ENCODE measurements at regions of chr1 and their contacts with region 1.

Region 1: DNA sequence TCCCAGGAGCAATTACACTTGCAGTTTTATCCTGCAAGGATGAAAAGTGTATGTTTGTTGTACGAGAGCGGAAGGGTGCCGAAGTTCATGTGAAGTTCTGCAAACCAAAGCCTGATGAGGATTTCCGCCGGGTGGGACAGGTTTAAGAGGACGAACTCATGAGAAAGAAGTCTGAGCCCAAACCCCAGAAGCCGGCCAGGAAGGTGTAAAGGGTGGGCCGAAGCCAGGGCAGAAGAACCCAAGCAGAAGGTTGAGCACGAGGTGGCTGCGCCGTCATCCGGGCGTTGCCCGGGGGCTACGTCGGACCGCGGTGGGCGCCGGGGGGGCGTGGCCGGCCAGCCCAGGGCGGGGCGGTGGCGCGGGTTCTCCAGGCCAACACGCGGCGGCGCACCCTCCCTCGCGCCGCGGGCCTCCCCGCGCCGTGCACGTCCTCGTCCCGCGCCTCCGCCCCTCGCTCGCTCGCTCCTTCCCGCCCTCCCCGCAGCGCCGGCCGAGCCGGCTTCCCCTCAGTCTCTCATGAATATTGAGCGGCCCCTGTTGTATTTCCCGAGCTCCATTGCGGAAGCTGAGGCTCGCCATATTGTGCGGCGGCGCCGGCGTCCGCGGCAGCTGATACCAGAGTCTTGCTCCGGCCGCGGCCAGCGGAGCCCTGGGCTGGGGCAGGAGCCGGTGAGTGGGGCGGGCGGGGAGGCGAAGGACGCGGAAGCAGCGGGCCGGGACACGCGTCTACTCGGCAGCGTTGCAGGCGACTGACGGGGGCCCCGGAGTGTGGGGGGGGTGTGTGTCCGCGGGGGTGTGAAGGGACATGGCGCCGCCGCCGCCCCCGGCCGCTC is at the start of gene RNF2:
- DNase-seq: peak; percentile 82 to 84
- H3K4me3 ChIP-seq: peak within 1 kb of the TSS; percentile 80
- H3K4me3 Mint-ChIP-seq: peak within 1 kb of the TSS; percentile 73
- H3K27ac Mint-ChIP-seq: peak within 1 kb of the TSS; percentile 67
- H3K4me1 ChIP-seq: peaks cover 17% of the 10 kb centered on the region
- H3K4me1 Mint-ChIP-seq: peaks cover 6% of the 10 kb centered on the region
- H3K27me3 ChIP-seq: no peaks in the 10 kb centered on the region
- H3K27me3 Mint-ChIP-seq: no peaks in the 10 kb centered on the region
- CTCF ChIP-seq: no peak
- total RNA-seq, gene RNF2: 27.1 and 31.7 TPM in 2 replicates

Region 2: GRCh38 chr1:185033686-185034085 is 11.5 kb before region 1 on chr1:
- CTCF ChIA-PET with region 1: interaction called, 10 read pairs
- POLR2A ChIA-PET with region 1: interaction called, 3 read pairs
- intact Hi-C with region 1: no loop called
- DNase-seq: peak in 1 of 2 experiments; percentile 25
- H3K4me3 ChIP-seq: no peak overlapping the region
- H3K4me3 Mint-ChIP-seq: no peak overlapping the region
- H3K27ac Mint-ChIP-seq: no peak overlapping the region
- H3K4me1 ChIP-seq: peaks cover 9% of the 10 kb centered on the region
- H3K4me1 Mint-ChIP-seq: no peaks in the 10 kb centered on the region
- H3K27me3 ChIP-seq: no peaks in the 10 kb centered on the region
- H3K27me3 Mint-ChIP-seq: no peaks in the 10 kb centered on the region
- CTCF ChIP-seq: no peak

Region 3: DNA sequence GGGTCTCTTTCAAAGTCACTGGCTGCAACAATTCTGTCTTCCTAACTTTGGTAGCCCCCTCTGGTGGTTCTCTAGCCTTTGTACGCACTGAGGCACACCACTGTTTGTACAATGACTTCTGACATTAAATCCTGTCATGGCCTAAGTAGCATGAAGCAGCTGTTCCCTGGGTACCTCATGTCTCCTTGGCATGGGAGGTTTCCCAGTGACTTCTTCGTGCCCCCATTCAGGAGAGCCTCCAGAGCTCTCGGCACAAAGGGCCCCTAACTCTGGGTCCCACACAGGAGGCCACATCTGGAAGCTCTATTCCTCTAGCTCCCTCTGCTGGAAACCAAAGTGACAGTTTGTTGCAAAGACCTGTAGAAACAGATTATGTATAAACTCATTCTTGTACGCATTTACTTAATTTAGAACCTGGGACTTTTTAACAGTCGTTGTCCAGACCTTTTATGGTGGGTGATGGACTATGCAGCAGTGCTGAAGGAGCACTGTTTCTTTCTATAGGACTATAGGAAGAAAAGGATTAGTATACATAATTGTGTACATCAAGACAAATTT is 125.2 kb after region 1 on chr1:
- CTCF ChIA-PET with region 1: interaction called, 12 read pairs
- POLR2A ChIA-PET with region 1: no interaction called
- intact Hi-C with region 1: loop called (anchors 5 kb)
- DNase-seq: peak; percentile 55 to 71
- H3K4me3 ChIP-seq: no peak overlapping the region
- H3K4me3 Mint-ChIP-seq: peak overlapping the region; percentile 49
- H3K27ac Mint-ChIP-seq: no peak overlapping the region
- H3K4me1 ChIP-seq: no peaks in the 10 kb centered on the region
- H3K4me1 Mint-ChIP-seq: peaks cover 15% of the 10 kb centered on the region
- H3K27me3 ChIP-seq: no peaks in the 10 kb centered on the region
- H3K27me3 Mint-ChIP-seq: no peaks in the 10 kb centered on the region
- CTCF ChIP-seq: peak; percentile 75 to 79

Region 4: GRCh38 chr1:185200889-185201288 is 155.7 kb after region 1 on chr1:
- CTCF ChIA-PET with region 1: no interaction called
- POLR2A ChIA-PET with region 1: no interaction called
- intact Hi-C with region 1: no loop called
- DNase-seq: no peak
- H3K4me3 ChIP-seq: no peak overlapping the region
- H3K4me3 Mint-ChIP-seq: no peak overlapping the region
- H3K27ac Mint-ChIP-seq: no peak overlapping the region
- H3K4me1 ChIP-seq: no peaks in the 10 kb centered on the region
- H3K4me1 Mint-ChIP-seq: no peaks in the 10 kb centered on the region
- H3K27me3 ChIP-seq: no peaks in the 10 kb centered on the region
- H3K27me3 Mint-ChIP-seq: no peaks in the 10 kb centered on the region
- CTCF ChIP-seq: no peak

Region 5: GRCh38 chr1:185694081-185694480 is 648.9 kb after region 1 on chr1:
- CTCF ChIA-PET with region 1: no interaction called
- POLR2A ChIA-PET with region 1: no interaction called
- intact Hi-C with region 1: loop called (anchors 10 kb)
- DNase-seq: no peak
- H3K4me3 ChIP-seq: no peak overlapping the region
- H3K4me3 Mint-ChIP-seq: no peak overlapping the region
- H3K27ac Mint-ChIP-seq: peak overlapping the region; percentile 15
- H3K4me1 ChIP-seq: peaks cover 9% of the 10 kb centered on the region
- H3K4me1 Mint-ChIP-seq: peaks cover 10% of the 10 kb centered on the region
- H3K27me3 ChIP-seq: no peaks in the 10 kb centered on the region
- H3K27me3 Mint-ChIP-seq: no peaks in the 10 kb centered on the region
- CTCF ChIP-seq: no peak